PC-9 (cell line): ENCODE measurements at regions of chr7 and their contacts with region 1.

Region 1: GRCh38 chr7:27921081-27921836 is 181.3 kb downstream of the TAX1BP1 start:
- DNase-seq: peak; percentile 66 to 82
- H3K4me3 ChIP-seq: no peak overlapping the region
- H3K27ac ChIP-seq: 0 out of 2 replicates have a peak overlapping the region, but pooled peaks have one; percentile 1
- H3K4me1 ChIP-seq: peaks cover 33% of the 10 kb centered on the region
- H3K27me3 ChIP-seq: no peaks in the 10 kb centered on the region
- CTCF ChIP-seq: peak; percentile 91

Region 2: GRCh38 chr7:27576360-27576944 is 344.8 kb before region 1 on chr7:
- CTCF ChIA-PET with region 1: no interaction called
- POLR2A ChIA-PET with region 1: no interaction called
- intact Hi-C with region 1: loop called (anchors 5 kb)
- DNase-seq: no peak
- H3K4me3 ChIP-seq: no peak overlapping the region
- H3K27ac ChIP-seq: no peak overlapping the region
- H3K4me1 ChIP-seq: no peaks in the 10 kb centered on the region
- H3K27me3 ChIP-seq: no peaks in the 10 kb centered on the region
- CTCF ChIP-seq: peak; percentile 91

Region 3: DNA sequence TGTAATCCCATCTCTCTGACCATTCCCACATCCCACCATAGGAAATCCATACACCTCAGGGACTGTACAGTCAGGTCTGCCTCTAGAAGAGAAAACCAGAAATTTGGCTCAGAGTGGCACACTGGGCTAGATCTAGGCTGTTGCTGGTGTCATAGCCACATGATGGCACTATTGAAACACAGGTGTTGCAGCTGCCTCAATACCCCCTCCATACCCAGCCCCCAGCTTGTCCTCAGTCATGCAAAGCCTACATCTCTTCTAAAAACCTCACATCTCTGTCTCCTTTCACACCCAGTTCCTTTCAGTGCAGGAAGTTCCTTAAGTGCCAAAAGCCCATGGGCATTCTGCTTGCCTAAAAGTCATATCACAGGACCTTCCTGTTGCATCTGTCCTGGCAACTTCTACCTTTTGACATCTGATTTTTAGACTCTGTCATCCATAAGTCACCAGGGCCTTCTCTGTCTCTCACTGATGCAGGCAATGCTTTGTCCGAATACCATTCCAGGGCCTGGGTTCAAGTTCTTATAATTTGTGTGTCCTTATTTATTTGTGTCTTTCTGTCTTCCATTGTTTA is 231.6 kb before region 1 on chr7:
- CTCF ChIA-PET with region 1: interaction called, 3 read pairs
- POLR2A ChIA-PET with region 1: no interaction called
- intact Hi-C with region 1: loop called (anchors 1 kb)
- DNase-seq: peak; percentile 49 to 59
- H3K4me3 ChIP-seq: no peak overlapping the region
- H3K27ac ChIP-seq: no peak overlapping the region
- H3K4me1 ChIP-seq: peaks cover 16% of the 10 kb centered on the region
- H3K27me3 ChIP-seq: no peaks in the 10 kb centered on the region
- CTCF ChIP-seq: peak; percentile 69

Region 4: GRCh38 chr7:27784393-27785053 is 136.7 kb before region 1 on chr7:
- CTCF ChIA-PET with region 1: no interaction called
- POLR2A ChIA-PET with region 1: no interaction called
- intact Hi-C with region 1: loop called (anchors 1 kb)
- DNase-seq: peak; percentile 53 to 98
- H3K4me3 ChIP-seq: no peak overlapping the region
- H3K27ac ChIP-seq: no peak overlapping the region
- H3K4me1 ChIP-seq: peaks cover 25% of the 10 kb centered on the region
- H3K27me3 ChIP-seq: no peaks in the 10 kb centered on the region
- CTCF ChIP-seq: peak; percentile 92

Region 5: GRCh38 chr7:28020302-28020940 is 99.2 kb after region 1 on chr7:
- CTCF ChIA-PET with region 1: interaction called, 7 read pairs
- POLR2A ChIA-PET with region 1: no interaction called
- intact Hi-C with region 1: loop called (anchors 1 kb)
- DNase-seq: peak; percentile 66 to 69
- H3K4me3 ChIP-seq: no peak overlapping the region
- H3K27ac ChIP-seq: no peak overlapping the region
- H3K4me1 ChIP-seq: peaks cover 8% of the 10 kb centered on the region; the same call in 1 of the 2 replicates
- H3K27me3 ChIP-seq: no peaks in the 10 kb centered on the region
- CTCF ChIP-seq: peak; percentile 96